ENCODE measurements at regions of chr13 and their contacts with region 1.

Region 1: DNA sequence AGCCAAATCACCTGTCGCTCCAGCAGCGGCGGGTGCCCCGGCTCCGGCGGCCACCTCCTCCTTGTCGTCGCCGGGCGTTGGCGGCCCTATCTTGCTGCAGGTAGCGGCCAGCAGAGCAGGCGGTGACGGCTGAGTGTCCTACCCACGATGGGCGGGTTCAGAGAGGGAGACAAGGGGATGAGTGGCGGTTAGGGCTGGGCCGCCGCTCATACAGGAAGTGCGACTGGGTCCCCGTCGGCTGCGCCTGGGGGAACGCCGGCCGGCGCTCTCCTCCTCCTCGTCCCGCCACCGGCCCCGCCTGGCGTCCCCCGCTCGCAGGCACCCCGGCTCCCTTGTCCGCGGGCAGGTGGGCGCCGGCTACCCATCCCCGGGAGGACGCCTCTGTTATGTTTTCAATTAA is 1692.0 kb downstream of the SLITRK5 start:
- DNase-seq: peak; percentile 32
- ATAC-seq: peak; percentile 86
- H3K4me3 Mint-ChIP-seq: no peak overlapping the region
- H3K27ac Mint-ChIP-seq: no peak overlapping the region
- H3K4me1 Mint-ChIP-seq: peaks cover 9% of the 10 kb centered on the region
- H3K27me3 Mint-ChIP-seq: no peaks in the 10 kb centered on the region
- CTCF ChIP-seq: no peak

Region 2: DNA sequence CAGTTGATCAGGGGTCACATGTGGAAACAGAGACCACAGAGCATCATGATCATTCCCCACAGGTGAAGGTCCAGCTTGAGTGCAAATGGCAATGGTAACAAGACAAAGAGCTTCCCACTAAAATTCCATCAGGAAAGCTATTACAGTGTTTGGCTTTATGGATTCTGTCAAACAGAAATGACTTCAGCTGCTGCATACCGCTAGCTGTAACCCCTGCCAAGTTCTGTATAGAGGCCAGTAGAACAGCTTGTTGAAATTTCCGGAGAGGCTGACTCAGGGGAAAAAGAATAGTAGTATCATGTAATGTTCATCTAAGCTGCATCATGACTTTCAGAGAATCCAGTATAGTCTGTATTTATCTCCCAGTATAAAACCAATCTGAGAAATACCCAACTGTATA is 12.7 kb after region 1 on chr13:
- CTCF ChIA-PET with region 1: no interaction called
- POLR2A ChIA-PET with region 1: interaction called, 10 read pairs
- DNase-seq: no peak
- ATAC-seq: no peak
- H3K4me3 Mint-ChIP-seq: no peak overlapping the region
- H3K27ac Mint-ChIP-seq: no peak overlapping the region
- H3K4me1 Mint-ChIP-seq: peaks cover 17% of the 10 kb centered on the region
- H3K27me3 Mint-ChIP-seq: no peaks in the 10 kb centered on the region
- CTCF ChIP-seq: no peak

Region 3: DNA sequence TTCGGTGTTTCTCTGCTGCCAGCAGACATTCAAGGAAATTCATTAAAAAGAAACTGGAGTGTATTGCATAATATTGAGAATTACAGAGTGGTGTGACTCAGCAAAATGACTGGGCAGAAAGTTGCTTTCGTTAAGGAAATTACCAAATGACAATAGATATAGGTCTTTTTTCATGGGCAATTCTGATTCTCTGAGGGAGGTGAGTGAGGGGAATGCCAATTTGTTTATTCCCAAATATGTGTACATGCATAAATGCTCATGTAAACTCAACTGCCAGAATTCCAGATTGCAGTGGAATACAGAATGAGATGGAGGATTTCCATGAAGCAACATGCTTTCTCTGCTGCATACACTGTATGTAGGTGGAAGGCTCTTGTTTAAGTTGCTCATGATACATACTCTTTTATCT is 38.1 kb after region 1 on chr13:
- CTCF ChIA-PET with region 1: no interaction called
- POLR2A ChIA-PET with region 1: no interaction called
- DNase-seq: no peak
- ATAC-seq: no peak
- H3K4me3 Mint-ChIP-seq: no peak overlapping the region
- H3K27ac Mint-ChIP-seq: peak overlapping the region; percentile 32
- H3K4me1 Mint-ChIP-seq: peaks cover 22% of the 10 kb centered on the region
- H3K27me3 Mint-ChIP-seq: no peaks in the 10 kb centered on the region
- CTCF ChIP-seq: no peak

Region 4: GRCh38 chr13:89541091-89542030 is 178.2 kb after region 1 on chr13:
- CTCF ChIA-PET with region 1: no interaction called
- POLR2A ChIA-PET with region 1: no interaction called
- DNase-seq: no peak
- ATAC-seq: peak; percentile 22
- H3K4me3 Mint-ChIP-seq: no peak overlapping the region
- H3K27ac Mint-ChIP-seq: no peak overlapping the region
- H3K4me1 Mint-ChIP-seq: peaks cover 32% of the 10 kb centered on the region
- H3K27me3 Mint-ChIP-seq: no peaks in the 10 kb centered on the region
- CTCF ChIP-seq: no peak

Region 5: DNA sequence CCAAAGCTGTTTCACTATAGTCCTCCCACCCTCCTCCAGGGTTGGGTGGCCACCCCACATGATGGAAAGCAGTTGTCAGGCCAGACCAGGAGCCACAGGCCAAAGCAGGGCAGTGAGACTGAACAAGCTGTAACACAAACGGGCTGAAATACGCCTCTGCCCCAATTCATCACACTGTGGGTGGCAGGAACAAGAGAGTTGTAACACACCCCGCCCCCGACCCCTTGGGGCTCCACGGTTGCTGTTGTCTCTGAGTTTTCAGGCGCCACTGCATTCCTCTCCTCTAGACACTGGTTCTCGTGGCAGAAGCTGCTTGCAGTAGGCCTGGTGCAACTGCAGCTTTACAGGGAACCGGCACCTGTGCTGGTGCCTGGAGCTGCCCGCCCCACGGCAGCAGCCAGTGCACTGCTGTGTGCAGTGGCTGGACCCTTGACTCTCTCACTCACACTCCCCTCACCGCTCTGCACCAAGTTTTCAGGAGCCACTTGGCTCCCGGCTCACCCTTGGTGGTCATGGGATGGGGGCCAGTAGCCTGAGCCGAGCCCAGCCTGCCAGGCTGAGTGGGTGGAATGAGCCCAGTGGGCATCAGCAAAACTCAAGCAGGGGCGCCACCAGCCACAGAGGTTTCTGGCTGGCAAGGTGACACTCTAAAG is 669.8 kb after region 1 on chr13:
- CTCF ChIA-PET with region 1: no interaction called
- POLR2A ChIA-PET with region 1: no interaction called
- DNase-seq: no peak
- ATAC-seq: peak; percentile 65
- H3K4me3 Mint-ChIP-seq: no peak overlapping the region
- H3K27ac Mint-ChIP-seq: no peak overlapping the region
- H3K4me1 Mint-ChIP-seq: no peaks in the 10 kb centered on the region
- H3K27me3 Mint-ChIP-seq: no peaks in the 10 kb centered on the region
- CTCF ChIP-seq: no peak